ENCODE measurements at regions of chr22 and their contacts with region 1.

Region 1: GRCh38 chr22:32528984-32529982 is 54.7 kb downstream of the FBXO7 start:
- DNase-seq: peak; percentile 94
- ATAC-seq: peak; percentile 76

Region 2: GRCh38 chr22:32880893-32881596 is 351.8 kb after region 1 on chr22:
- intact Hi-C with region 1: no loop called
- DNase-seq: no peak
- ATAC-seq: peak; percentile 75

Region 3: GRCh38 chr22:33000342-33001280 is 471.3 kb after region 1 on chr22:
- intact Hi-C with region 1: loop called (anchors 5 kb)
- DNase-seq: peak; percentile 79
- ATAC-seq: peak; percentile 81